ENCODE measurements at regions of chr13 and their contacts with region 1.

Region 1: GRCh38 chr13:48532506-48533499 is at the start of gene RCBTB2:
- DNase-seq: peak; percentile 95 to 100 (median 99)
- ATAC-seq: peak; percentile 89
- H3K4me3 ChIP-seq: peak within 1 kb of the TSS; percentile 88 to 93
- H3K4me3 Mint-ChIP-seq: peak within 1 kb of the TSS; percentile 96
- H3K27ac ChIP-seq: peak within 1 kb of the TSS; percentile 90 to 97
- H3K27ac Mint-ChIP-seq: peak within 1 kb of the TSS; percentile 99
- H3K4me1 ChIP-seq: peaks cover 14% of the 10 kb centered on the region
- H3K4me1 Mint-ChIP-seq: peaks cover 23% of the 10 kb centered on the region
- H3K27me3 ChIP-seq: no peaks in the 10 kb centered on the region
- H3K27me3 Mint-ChIP-seq: no peaks in the 10 kb centered on the region
- CTCF ChIP-seq: no peak
- total RNA-seq, gene RCBTB2: 1.5 to 2.0 TPM

Region 2: GRCh38 chr13:48037346-48038173 is 495.2 kb before region 1 on chr13 and contains the start of gene NUDT15:
- CTCF ChIA-PET with region 1: interaction called, 3 read pairs
- POLR2A ChIA-PET with region 1: interaction called, 12 read pairs
- intact Hi-C with region 1: loop called in 1 of 2 experiments (anchors 2 kb)
- DNase-seq: peak; percentile 88 to 99 (median 97)
- ATAC-seq: peak; percentile 90
- H3K4me3 ChIP-seq: peak within 1 kb of the TSS; percentile 81 to 96
- H3K4me3 Mint-ChIP-seq: peak within 1 kb of the TSS; percentile 97
- H3K27ac ChIP-seq: peak within 1 kb of the TSS; percentile 99
- H3K27ac Mint-ChIP-seq: peak within 1 kb of the TSS; percentile 98
- H3K4me1 ChIP-seq: peaks cover 20% of the 10 kb centered on the region
- H3K4me1 Mint-ChIP-seq: peaks cover 32% of the 10 kb centered on the region
- H3K27me3 ChIP-seq: no peaks in the 10 kb centered on the region
- H3K27me3 Mint-ChIP-seq: no peaks in the 10 kb centered on the region
- CTCF ChIP-seq: peak; percentile 99
- total RNA-seq, gene NUDT15: 23.8 to 24.9 TPM

Region 3: DNA sequence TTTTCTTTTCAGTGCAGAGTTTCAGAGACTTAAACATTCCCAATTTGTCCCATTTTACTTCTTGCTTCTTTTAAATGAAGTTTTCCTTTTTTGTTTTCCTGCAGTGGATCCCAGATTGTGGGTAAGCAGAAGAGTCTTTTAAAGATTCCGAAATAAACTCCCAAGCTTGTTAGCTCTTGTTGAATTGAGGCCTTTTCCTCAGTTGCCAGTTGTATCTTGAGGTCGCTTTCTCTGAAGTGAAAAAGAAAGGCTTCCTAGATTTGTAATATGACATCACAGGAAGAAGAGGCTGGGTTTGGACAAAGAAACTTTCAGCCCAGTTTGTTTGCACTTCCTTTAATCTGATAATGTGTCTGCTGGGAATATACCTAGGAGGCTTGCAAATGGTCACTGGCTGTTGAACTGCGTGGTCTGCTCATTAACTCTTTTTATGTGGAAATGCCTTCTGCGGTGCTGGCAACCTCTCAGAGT is 119.9 kb before region 1 on chr13 and contains the start of gene LPAR6:
- CTCF ChIA-PET with region 1: interaction called, 3 read pairs
- POLR2A ChIA-PET with region 1: interaction called, 3 read pairs
- intact Hi-C with region 1: loop called in 1 of 2 experiments (anchors 1 kb)
- DNase-seq: peak in 2 of 9 experiments; percentile 51 to 74
- ATAC-seq: peak; percentile 26
- H3K4me3 ChIP-seq: peak within 1 kb of the TSS; percentile 38 to 67
- H3K4me3 Mint-ChIP-seq: peak within 1 kb of the TSS; percentile 98
- H3K27ac ChIP-seq: peak within 1 kb of the TSS; percentile 24 to 83
- H3K27ac Mint-ChIP-seq: peak within 1 kb of the TSS; percentile 98
- H3K4me1 ChIP-seq: peaks cover 4% of the 10 kb centered on the region
- H3K4me1 Mint-ChIP-seq: peaks cover 42% of the 10 kb centered on the region
- H3K27me3 ChIP-seq: no peaks in the 10 kb centered on the region
- H3K27me3 Mint-ChIP-seq: no peaks in the 10 kb centered on the region
- CTCF ChIP-seq: no peak
- total RNA-seq, gene LPAR6: 5.4 to 5.7 TPM

Region 4: DNA sequence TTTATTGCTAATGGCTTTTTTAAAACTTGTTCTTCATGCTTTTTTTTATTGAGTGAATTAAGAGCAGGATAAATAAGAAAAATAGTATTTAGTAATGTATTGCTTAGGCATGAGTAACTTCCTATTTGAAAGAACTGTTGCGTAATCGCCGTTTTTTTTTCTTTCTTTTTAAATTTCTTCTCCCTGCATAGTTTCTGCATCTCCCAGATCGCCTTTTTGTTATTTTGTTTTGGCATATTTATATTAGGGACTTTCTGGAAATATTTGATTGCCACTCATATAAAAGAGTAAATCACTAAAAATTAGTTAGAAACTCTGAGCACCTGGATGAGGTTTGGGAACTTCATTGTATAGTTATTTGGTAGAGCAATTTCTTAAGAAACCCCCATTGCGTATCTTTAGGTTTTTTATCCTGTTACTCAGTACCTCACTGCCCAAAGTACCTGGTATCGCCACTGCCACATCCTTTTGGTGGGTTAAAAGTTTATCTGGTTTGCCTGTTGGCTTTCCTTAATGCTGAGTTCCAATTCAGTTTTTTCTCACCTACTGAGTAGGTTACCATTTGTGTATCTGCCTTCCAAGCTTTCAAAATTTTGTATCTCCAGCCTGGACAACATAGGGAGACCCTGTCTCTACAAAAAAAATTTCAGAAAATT is 83.7 kb before region 1 on chr13:
- CTCF ChIA-PET with region 1: no interaction called
- POLR2A ChIA-PET with region 1: no interaction called
- intact Hi-C with region 1: no loop called
- DNase-seq: peak in 1 of 9 experiments; percentile 11
- ATAC-seq: no peak
- H3K4me3 ChIP-seq: no peak overlapping the region
- H3K4me3 Mint-ChIP-seq: peak overlapping the region; percentile 46
- H3K27ac ChIP-seq: no peak overlapping the region
- H3K27ac Mint-ChIP-seq: no peak overlapping the region
- H3K4me1 ChIP-seq: no peaks in the 10 kb centered on the region
- H3K4me1 Mint-ChIP-seq: peaks cover 18% of the 10 kb centered on the region
- H3K27me3 ChIP-seq: no peaks in the 10 kb centered on the region
- H3K27me3 Mint-ChIP-seq: no peaks in the 10 kb centered on the region
- CTCF ChIP-seq: no peak

Region 5: GRCh38 chr13:48505597-48506091 is 27.2 kb before region 1 on chr13:
- CTCF ChIA-PET with region 1: no interaction called
- POLR2A ChIA-PET with region 1: interaction called, 35 read pairs
- intact Hi-C with region 1: loop called (anchors 1 to 2 kb)
- DNase-seq: peak in 8 of 9 experiments; percentile 36 to 92 (median 58)
- ATAC-seq: peak; percentile 92
- H3K4me3 ChIP-seq: no peak overlapping the region
- H3K4me3 Mint-ChIP-seq: peak overlapping the region; percentile 65
- H3K27ac ChIP-seq: peak overlapping the region; percentile 36 to 76
- H3K27ac Mint-ChIP-seq: peak overlapping the region; percentile 89
- H3K4me1 ChIP-seq: peaks cover 29% of the 10 kb centered on the region
- H3K4me1 Mint-ChIP-seq: peaks cover 51% of the 10 kb centered on the region
- H3K27me3 ChIP-seq: no peaks in the 10 kb centered on the region
- H3K27me3 Mint-ChIP-seq: no peaks in the 10 kb centered on the region
- CTCF ChIP-seq: no peak

Region 6: DNA sequence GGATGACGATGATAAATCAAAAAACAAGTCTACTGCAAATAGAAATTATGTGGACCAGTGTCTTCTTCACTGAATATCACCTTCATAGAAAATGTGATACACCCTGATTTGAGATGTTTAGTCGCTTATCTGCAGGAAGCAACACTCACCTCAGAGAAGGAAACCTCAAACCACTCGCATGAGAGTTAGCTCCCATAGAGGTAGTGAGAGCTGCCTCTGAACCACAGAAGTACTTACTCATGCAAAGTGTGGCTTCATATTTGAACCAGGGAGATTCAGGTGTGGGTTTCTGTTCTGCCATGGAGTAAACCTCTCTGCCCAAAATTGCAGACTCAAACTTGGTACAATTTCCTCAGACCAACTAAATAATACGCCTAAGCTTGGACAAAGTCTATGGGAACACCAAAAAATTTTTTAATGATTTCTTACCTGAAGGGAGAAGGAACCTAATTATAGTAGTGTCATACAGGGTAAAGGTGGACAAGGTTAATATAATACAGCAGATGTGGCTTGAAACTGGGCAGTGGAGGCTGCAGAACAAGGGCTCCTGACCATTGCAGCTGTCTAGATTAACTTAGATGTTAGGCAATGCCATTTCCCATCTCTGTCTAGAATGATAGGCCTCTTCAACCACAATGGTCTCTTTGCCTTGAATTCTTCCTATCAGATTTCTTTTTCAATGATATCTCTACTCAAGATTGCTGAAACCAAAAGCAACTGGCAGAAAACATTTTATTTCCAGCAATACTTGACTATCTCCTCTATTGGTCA is 29.7 kb after region 1 on chr13:
- CTCF ChIA-PET with region 1: interaction called, 3 read pairs
- POLR2A ChIA-PET with region 1: interaction called, 20 read pairs
- intact Hi-C with region 1: loop called (anchors 1 to 2 kb)
- DNase-seq: peak; percentile 27 to 93 (median 66)
- ATAC-seq: peak; percentile 98
- H3K4me3 ChIP-seq: no peak overlapping the region
- H3K4me3 Mint-ChIP-seq: peak overlapping the region; percentile 43
- H3K27ac ChIP-seq: peak overlapping the region in 1 of 2 experiments; percentile 3
- H3K27ac Mint-ChIP-seq: no peak overlapping the region
- H3K4me1 ChIP-seq: peaks cover 27% of the 10 kb centered on the region
- H3K4me1 Mint-ChIP-seq: peaks cover 33% of the 10 kb centered on the region
- H3K27me3 ChIP-seq: no peaks in the 10 kb centered on the region
- H3K27me3 Mint-ChIP-seq: peaks cover 43% of the 10 kb centered on the region
- CTCF ChIP-seq: no peak

Region 7: GRCh38 chr13:48975856-48976575 is 443.2 kb after region 1 on chr13 and contains the start of gene FNDC3A:
- CTCF ChIA-PET with region 1: no interaction called
- POLR2A ChIA-PET with region 1: interaction called, 4 read pairs
- intact Hi-C with region 1: loop called in 1 of 2 experiments (anchors 10 kb)
- DNase-seq: peak; percentile 70 to 93 (median 83)
- ATAC-seq: peak; percentile 70
- H3K4me3 ChIP-seq: peak within 1 kb of the TSS; percentile 79 to 80
- H3K4me3 Mint-ChIP-seq: peak within 1 kb of the TSS; percentile 97
- H3K27ac ChIP-seq: peak within 1 kb of the TSS; percentile 79 to 91
- H3K27ac Mint-ChIP-seq: peak within 1 kb of the TSS; percentile 99
- H3K4me1 ChIP-seq: peaks cover 33% of the 10 kb centered on the region
- H3K4me1 Mint-ChIP-seq: peaks cover 42% of the 10 kb centered on the region
- H3K27me3 ChIP-seq: no peaks in the 10 kb centered on the region
- H3K27me3 Mint-ChIP-seq: no peaks in the 10 kb centered on the region
- CTCF ChIP-seq: no peak
- total RNA-seq, gene FNDC3A: 27.0 to 27.7 TPM

Region 8: GRCh38 chr13:49300739-49301589 is 768.2 kb after region 1 on chr13:
- CTCF ChIA-PET with region 1: no interaction called
- POLR2A ChIA-PET with region 1: no interaction called
- intact Hi-C with region 1: no loop called
- DNase-seq: peak; percentile 25 to 87 (median 59)
- ATAC-seq: peak; percentile 99
- H3K4me3 ChIP-seq: peak overlapping the region; percentile 45 to 52
- H3K4me3 Mint-ChIP-seq: peak overlapping the region; percentile 84
- H3K27ac ChIP-seq: peak overlapping the region in 1 of 2 experiments; percentile 17
- H3K27ac Mint-ChIP-seq: peak overlapping the region; percentile 77
- H3K4me1 ChIP-seq: no peaks in the 10 kb centered on the region
- H3K4me1 Mint-ChIP-seq: peaks cover 4% of the 10 kb centered on the region
- H3K27me3 ChIP-seq: no peaks in the 10 kb centered on the region
- H3K27me3 Mint-ChIP-seq: no peaks in the 10 kb centered on the region
- CTCF ChIP-seq: peak; percentile 83